CD4-positive, alpha-beta T cell (primary cell): ENCODE measurements at regions of chr18 and their contacts with region 1.

Region 1: DNA sequence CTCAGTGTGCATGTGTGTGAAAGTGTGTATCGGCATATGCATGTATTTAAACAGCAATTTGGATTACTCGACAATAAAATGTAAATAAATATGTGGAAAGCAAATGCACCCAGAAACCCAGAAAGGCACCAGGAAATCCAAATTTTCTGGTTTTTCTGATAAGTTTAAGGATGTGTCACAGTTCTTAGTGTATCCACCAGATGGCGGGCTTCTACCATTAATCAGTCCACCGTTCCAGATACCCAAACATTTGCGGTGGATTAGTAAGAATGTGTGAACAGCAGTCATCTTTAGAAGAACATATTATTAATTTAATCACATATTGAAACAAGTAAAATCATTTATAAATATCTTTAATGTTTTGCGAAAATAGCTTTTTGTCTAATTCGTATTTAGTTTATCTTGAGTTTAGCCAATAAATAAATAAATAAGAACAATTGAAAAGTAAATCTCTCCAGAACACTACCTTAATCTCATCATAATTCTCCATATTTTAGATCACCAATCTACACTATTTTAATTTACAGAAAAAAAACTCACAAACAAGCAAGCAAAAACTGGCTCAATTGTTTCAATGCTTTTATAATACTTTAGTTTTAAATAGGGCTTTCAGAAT is 298.9 kb downstream of the DSEL start:
- DNase-seq: peak in 13 of 14 experiments; percentile 16 to 76 (median 37)
- ATAC-seq: peak; percentile 86
- H3K4me3 ChIP-seq: no peak overlapping the region
- H3K4me3 Mint-ChIP-seq: no peak overlapping the region
- H3K27ac ChIP-seq: no peak overlapping the region
- H3K27ac Mint-ChIP-seq: no peak overlapping the region
- H3K4me1 ChIP-seq: no peaks in the 10 kb centered on the region
- H3K4me1 Mint-ChIP-seq: no peaks in the 10 kb centered on the region
- H3K27me3 ChIP-seq: no peaks in the 10 kb centered on the region
- H3K27me3 Mint-ChIP-seq: peaks cover 7% of the 10 kb centered on the region
- CTCF ChIP-seq: peak; percentile 87

Region 2: DNA sequence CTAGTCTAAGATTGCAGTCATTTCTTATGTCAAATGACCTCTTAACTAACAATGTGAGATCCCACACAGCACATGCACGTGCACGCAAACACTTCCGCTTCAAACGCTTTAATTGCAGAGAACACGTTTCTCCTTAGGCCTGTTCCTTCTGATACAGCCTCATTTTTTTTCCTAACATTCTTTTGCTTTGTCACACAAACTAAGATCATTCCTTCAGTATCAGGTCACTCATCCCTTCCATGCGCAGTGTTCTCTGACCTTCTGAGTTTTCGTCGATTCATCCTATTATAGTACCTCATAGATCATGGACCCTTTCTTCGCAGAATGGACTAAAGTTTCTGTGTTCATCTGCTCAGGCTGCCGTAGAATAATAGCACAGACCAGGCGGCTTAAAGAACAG is 286.6 kb before region 1 on chr18:
- CTCF ChIA-PET with region 1: no interaction called
- POLR2A ChIA-PET with region 1: no interaction called
- intact Hi-C with region 1: no loop called
- DNase-seq: no peak
- ATAC-seq: no peak
- H3K4me3 ChIP-seq: no peak overlapping the region
- H3K4me3 Mint-ChIP-seq: no peak overlapping the region
- H3K27ac ChIP-seq: no peak overlapping the region
- H3K27ac Mint-ChIP-seq: no peak overlapping the region
- H3K4me1 ChIP-seq: no peaks in the 10 kb centered on the region
- H3K4me1 Mint-ChIP-seq: no peaks in the 10 kb centered on the region
- H3K27me3 ChIP-seq: no peaks in the 10 kb centered on the region
- H3K27me3 Mint-ChIP-seq: no peaks in the 10 kb centered on the region
- CTCF ChIP-seq: no peak

Region 3: GRCh38 chr18:68660354-68661183 is 1442.9 kb after region 1 on chr18:
- CTCF ChIA-PET with region 1: interaction called, 3 read pairs
- POLR2A ChIA-PET with region 1: interaction called, 3 read pairs
- intact Hi-C with region 1: loop called (anchors 1 kb)
- DNase-seq: peak in 3 of 14 experiments; percentile 35 to 52 (median 43)
- ATAC-seq: no peak
- H3K4me3 ChIP-seq: no peak overlapping the region
- H3K4me3 Mint-ChIP-seq: no peak overlapping the region
- H3K27ac ChIP-seq: no peak overlapping the region
- H3K27ac Mint-ChIP-seq: no peak overlapping the region
- H3K4me1 ChIP-seq: no peaks in the 10 kb centered on the region
- H3K4me1 Mint-ChIP-seq: no peaks in the 10 kb centered on the region
- H3K27me3 ChIP-seq: no peaks in the 10 kb centered on the region
- H3K27me3 Mint-ChIP-seq: peaks cover 5% of the 10 kb centered on the region
- CTCF ChIP-seq: peak; percentile 69

Region 4: DNA sequence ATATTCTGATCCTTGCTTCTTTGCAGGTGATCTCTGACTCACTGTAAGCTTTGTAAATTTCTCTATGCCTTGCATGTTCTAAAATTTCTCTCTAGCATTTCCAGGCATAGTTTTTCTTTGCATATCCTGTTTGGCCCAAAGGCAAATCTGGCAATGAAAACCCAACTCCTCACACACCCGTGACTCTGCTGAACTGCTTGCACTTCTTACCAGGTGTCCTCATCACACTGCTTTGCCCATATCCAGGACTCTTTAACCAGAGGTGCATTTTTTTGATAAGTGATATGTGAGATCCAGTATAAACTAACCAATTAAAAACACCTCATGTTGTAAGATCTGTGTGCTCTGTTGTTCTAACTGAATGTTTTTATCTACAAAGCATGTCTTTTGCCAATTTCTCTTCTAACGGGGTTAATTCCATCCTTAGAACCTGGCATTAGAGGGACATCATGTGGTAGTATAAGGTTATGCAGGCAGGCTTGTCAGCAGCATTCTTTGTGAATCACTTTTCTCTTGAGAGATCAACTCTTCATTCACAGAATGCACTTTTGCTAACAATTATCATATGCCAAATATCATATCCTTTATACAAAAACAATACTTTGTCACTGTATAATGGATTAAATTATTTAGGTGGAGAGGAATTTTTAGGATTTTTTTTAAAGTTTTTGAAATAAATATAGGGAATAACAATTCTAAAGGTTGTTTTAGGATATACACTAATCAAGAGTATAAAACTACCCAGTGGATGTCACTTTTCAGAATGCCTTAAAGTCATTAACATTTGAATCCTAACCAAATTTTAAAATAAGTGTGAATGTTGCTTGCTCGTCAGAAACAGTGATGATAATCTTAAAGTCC is 1518.1 kb after region 1 on chr18:
- CTCF ChIA-PET with region 1: no interaction called
- POLR2A ChIA-PET with region 1: no interaction called
- intact Hi-C with region 1: loop called (anchors 1 to 2 kb)
- DNase-seq: peak in 3 of 14 experiments; percentile 43 to 58 (median 53)
- ATAC-seq: peak; percentile 64
- H3K4me3 ChIP-seq: no peak overlapping the region
- H3K4me3 Mint-ChIP-seq: no peak overlapping the region
- H3K27ac ChIP-seq: no peak overlapping the region
- H3K27ac Mint-ChIP-seq: no peak overlapping the region
- H3K4me1 ChIP-seq: no peaks in the 10 kb centered on the region
- H3K4me1 Mint-ChIP-seq: no peaks in the 10 kb centered on the region
- H3K27me3 ChIP-seq: no peaks in the 10 kb centered on the region
- H3K27me3 Mint-ChIP-seq: no peaks in the 10 kb centered on the region
- CTCF ChIP-seq: peak; percentile 51